ENCODE measurements at regions of chr15 and their contacts with region 1.

Region 1: GRCh38 chr15:46753946-46754345 is 963.4 kb upstream of the SEMA6D start:
- DNase-seq: no peak
- H3K4me3 ChIP-seq: no peak overlapping the region
- H3K27ac ChIP-seq: no peak overlapping the region
- H3K4me1 ChIP-seq: no peaks in the 10 kb centered on the region
- H3K27me3 ChIP-seq: no peaks in the 10 kb centered on the region
- CTCF ChIP-seq: no peak
- POLR2A ChIP-seq: no peak

Region 2: DNA sequence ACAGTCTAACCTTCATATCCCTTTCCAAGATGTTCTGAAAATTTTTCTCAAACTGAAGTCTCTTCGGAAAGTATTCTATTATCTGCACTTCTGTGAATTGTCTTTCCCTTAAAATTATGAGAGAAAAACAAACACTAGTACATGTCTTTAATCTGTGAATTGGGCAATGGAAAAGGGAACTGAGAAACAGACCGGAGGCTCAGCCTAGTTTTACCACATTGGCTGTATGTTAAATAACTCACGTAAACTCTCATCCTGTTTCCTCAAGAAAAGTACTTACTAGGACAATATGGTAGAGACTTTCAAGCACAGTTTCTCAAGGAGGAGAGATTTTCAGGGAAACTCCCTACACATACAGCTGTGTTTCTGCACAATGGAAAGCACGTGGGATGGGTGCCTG is 18.8 kb before region 1 on chr15:
- intact Hi-C with region 1: loop called (anchors 1 kb)
- DNase-seq: no peak
- H3K4me3 ChIP-seq: no peak overlapping the region
- H3K27ac ChIP-seq: no peak overlapping the region
- H3K4me1 ChIP-seq: no peaks in the 10 kb centered on the region
- H3K27me3 ChIP-seq: no peaks in the 10 kb centered on the region
- CTCF ChIP-seq: no peak
- POLR2A ChIP-seq: no peak

Region 3: GRCh38 chr15:47514211-47514652 is 760.3 kb after region 1 on chr15:
- intact Hi-C with region 1: no loop called
- DNase-seq: no peak
- H3K4me3 ChIP-seq: no peak overlapping the region
- H3K27ac ChIP-seq: no peak overlapping the region
- H3K4me1 ChIP-seq: peaks cover 18% of the 10 kb centered on the region
- H3K27me3 ChIP-seq: no peaks in the 10 kb centered on the region
- CTCF ChIP-seq: no peak
- POLR2A ChIP-seq: no peak

Region 4: GRCh38 chr15:47839233-47839825 is 1085.4 kb after region 1 on chr15:
- intact Hi-C with region 1: no loop called
- DNase-seq: no peak
- H3K4me3 ChIP-seq: no peak overlapping the region
- H3K27ac ChIP-seq: no peak overlapping the region
- H3K4me1 ChIP-seq: no peaks in the 10 kb centered on the region
- H3K27me3 ChIP-seq: no peaks in the 10 kb centered on the region
- CTCF ChIP-seq: no peak
- POLR2A ChIP-seq: no peak

Measured in vagina (tissue), 2 donors.